HAP-1 (cell line): ENCODE measurements at regions of chrX and their contacts with region 1.

Region 1: DNA sequence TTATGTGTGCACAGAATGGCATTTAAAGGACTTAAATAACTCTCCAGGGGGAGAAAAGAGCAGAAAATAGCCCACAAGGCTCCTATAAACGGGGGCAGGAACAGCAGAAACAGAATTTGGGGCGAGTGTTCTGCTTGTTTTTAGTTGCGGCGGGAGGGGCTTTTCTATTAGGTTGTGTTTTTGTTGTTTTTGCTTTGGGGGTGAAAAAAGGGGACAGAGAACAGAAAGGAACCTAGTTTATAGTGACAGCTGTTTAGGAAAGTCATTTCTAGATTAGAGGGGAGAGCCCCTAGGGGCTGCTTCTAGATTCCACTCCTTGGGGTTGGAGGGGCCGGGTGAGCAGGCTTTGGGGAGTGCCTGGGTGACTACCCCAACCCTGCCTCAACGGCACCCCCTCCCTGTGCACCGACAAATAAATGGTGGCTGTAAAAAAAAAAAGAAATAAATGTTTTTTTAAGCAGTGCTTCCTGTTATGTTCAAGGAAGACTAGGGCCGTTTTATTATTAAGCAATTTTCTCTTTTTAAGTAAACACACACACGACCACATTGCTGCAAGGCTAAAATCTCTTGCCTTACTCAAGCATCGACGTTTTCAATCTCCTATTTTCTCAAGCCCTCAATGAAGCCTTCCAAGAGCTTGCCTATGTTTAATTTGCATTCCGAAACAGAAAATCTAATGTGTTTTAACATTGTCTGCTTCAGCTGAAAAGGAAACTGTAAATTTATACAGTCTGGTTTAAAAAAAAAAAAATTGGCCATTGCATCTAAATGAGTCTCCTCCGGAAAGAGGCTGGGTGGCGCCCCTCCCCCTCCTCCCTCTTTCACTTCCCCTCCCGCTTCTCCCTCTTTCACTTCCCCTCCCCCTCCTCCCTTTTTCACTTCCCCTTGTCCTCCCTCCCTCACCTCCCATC is 123.3 kb upstream of the TBL1X start:
- DNase-seq: peak; percentile 48 to 78
- H3K4me3 ChIP-seq: no peak overlapping the region
- H3K4me1 ChIP-seq: peaks cover 18% of the 10 kb centered on the region
- H3K27me3 ChIP-seq: no peaks in the 10 kb centered on the region

Region 2: DNA sequence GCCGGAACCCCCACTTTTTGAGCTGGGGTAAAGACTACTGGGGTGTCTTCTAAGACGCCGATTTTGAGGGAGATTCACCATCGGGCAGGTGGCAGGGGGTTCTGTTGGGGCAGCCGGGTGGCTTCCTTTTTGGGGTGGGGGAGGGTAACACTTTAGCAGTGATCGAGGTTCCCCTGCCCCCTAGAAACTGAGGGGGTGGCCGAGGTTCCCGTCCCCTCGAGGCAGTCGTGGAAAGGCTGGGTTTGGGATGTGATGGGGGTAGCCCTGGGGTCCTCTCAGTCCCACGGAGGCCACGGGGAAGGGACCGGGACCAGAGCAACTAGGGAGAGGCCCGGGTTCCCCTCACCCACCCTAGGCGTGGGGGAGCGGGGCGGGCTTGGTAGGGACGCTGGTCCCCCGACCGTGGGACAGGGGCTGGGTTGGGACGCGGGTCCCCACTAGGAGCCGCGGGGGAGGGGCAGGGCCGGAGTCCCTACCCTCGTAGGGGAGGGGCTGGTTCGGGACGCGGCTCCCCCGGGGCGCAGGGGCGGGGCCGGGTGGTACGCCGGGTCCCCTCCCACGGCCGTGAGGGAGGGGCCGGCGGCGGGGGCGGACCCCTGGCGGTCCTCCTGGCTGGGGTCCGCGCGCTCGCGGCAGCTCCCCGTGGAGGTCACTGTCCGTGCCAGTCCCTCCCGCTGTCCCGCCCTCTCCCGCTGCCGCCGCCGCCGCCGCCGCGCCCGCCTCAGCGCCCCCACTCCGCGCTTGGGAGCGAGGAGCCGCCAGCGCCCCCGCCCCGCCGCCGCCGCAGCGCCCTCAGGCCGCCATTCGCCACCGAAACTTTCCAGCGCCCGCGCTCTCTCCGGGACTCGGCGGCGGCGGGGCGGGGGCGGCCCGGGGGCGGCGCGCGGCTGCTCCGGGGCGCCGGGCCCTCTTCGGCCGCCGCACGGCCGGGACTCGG is 123.2 kb after region 1 on chrX and contains the start of gene TBL1X:
- in situ Hi-C with region 1: loop called (anchors 5 kb)
- DNase-seq: peak; percentile 68 to 91
- H3K4me3 ChIP-seq: peak within 1 kb of the TSS; percentile 82
- H3K4me1 ChIP-seq: peaks cover 31% of the 10 kb centered on the region
- H3K27me3 ChIP-seq: no peaks in the 10 kb centered on the region

Region 3: DNA sequence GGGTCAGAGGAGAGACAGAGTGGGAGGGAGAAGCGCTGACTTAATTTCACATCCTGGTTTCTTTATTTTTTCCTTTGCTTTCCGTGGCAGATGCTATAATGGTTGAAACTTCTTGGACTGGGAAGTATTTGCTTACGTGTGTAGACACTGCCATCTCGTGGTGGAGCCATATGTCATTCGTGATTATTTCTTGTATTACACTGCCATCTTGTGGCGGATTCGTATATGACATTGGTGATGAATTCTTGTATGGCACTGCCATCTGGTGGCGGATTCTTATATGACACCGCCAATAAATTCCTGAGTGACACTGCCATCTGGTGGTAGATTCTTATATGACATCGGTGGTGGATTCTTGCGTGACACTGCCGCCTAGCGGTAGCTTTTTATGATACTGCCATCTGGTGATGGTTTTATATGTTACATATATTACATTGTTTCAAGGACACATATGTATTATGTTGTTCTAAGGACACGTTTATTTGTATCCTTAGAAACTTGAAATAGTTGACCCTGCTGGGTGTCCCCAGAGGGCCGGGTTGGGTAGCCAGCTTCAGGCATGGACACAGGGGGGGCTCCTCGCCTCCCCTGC is 777.9 kb after region 1 on chrX:
- in situ Hi-C with region 1: no loop called
- DNase-seq: peak; percentile 52 to 83
- H3K4me3 ChIP-seq: no peak overlapping the region
- H3K4me1 ChIP-seq: no peaks in the 10 kb centered on the region
- H3K27me3 ChIP-seq: no peaks in the 10 kb centered on the region